ENCODE measurements at regions of chr4 and their contacts with region 1.

Region 1: GRCh38 chr4:173420324-173420752 is 21.4 kb upstream of the SCRG1 start:
- DNase-seq: peak in 5 of 9 donors; percentile 10 to 40 (median 28)
- ATAC-seq: peak; percentile 37
- H3K4me3 ChIP-seq: no peak overlapping the region
- H3K4me3 Mint-ChIP-seq: peak overlapping the region in 1 of 10 donors; percentile 21
- H3K27ac ChIP-seq: no peak overlapping the region
- H3K27ac Mint-ChIP-seq: peak overlapping the region in 4 of 9 donors; percentile 4 to 22 (median 8)
- H3K4me1 ChIP-seq: peaks cover 2 to 5% of the 10 kb centered on the region in 2 donors
- H3K4me1 Mint-ChIP-seq: peaks cover 6 to 25% (median 6%) of the 10 kb centered on the region in 7 donors
- H3K27me3 ChIP-seq: no peaks in the 10 kb centered on the region
- H3K27me3 Mint-ChIP-seq: peaks cover 0 to 6% (median 0%) of the 10 kb centered on the region in 5 donors

Region 2: GRCh38 chr4:172982151-172982590 is 438.2 kb before region 1 on chr4:
- CTCF ChIA-PET with region 1: no interaction called
- POLR2A ChIA-PET with region 1: no interaction called
- intact Hi-C with region 1: no loop called
- DNase-seq: no peak
- ATAC-seq: no peak
- H3K4me3 ChIP-seq: no peak overlapping the region
- H3K4me3 Mint-ChIP-seq: no peak overlapping the region
- H3K27ac ChIP-seq: no peak overlapping the region
- H3K27ac Mint-ChIP-seq: no peak overlapping the region
- H3K4me1 ChIP-seq: no peaks in the 10 kb centered on the region
- H3K4me1 Mint-ChIP-seq: no peaks in the 10 kb centered on the region
- H3K27me3 ChIP-seq: no peaks in the 10 kb centered on the region
- H3K27me3 Mint-ChIP-seq: peaks cover 0 to 24% (median 12%) of the 10 kb centered on the region in 5 donors

Region 3: GRCh38 chr4:173013232-173013930 is 407.0 kb before region 1 on chr4:
- CTCF ChIA-PET with region 1: interaction called, 7 read pairs
- POLR2A ChIA-PET with region 1: no interaction called
- intact Hi-C with region 1: loop called (anchors 1 kb)
- DNase-seq: peak; percentile 12 to 64 (median 50)
- ATAC-seq: peak; percentile 77
- H3K4me3 ChIP-seq: no peak overlapping the region
- H3K4me3 Mint-ChIP-seq: no peak overlapping the region
- H3K27ac ChIP-seq: no peak overlapping the region
- H3K27ac Mint-ChIP-seq: no peak overlapping the region
- H3K4me1 ChIP-seq: no peaks in the 10 kb centered on the region
- H3K4me1 Mint-ChIP-seq: peaks cover 0 to 4% (median 0%) of the 10 kb centered on the region in 7 donors
- H3K27me3 ChIP-seq: no peaks in the 10 kb centered on the region
- H3K27me3 Mint-ChIP-seq: peaks cover 0 to 5% (median 0%) of the 10 kb centered on the region in 5 donors

Region 4: DNA sequence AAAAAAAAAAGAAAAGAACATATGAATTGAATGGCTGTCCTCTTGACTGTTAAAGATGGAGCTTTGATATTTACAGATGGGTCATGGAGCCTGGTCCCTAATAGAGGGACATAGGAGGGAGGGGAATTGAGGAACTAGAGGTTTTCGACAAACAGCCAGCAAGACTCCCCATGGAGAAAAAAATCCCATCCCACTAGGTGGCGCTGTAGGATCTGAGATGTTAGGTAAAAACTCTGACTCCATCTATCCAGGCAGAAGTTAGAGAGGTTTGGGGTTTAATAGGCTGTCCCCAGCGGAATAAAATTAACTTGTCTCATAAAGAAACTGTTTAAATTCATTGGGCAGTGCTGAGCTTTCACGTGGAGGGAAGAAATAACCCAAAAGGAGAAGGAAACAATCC is 132.0 kb before region 1 on chr4:
- CTCF ChIA-PET with region 1: interaction called, 3 read pairs
- POLR2A ChIA-PET with region 1: interaction called, 3 read pairs
- intact Hi-C with region 1: loop called (anchors 1 kb)
- DNase-seq: peak; percentile 22 to 68 (median 44)
- ATAC-seq: peak; percentile 63
- H3K4me3 ChIP-seq: no peak overlapping the region
- H3K4me3 Mint-ChIP-seq: peak overlapping the region in 7 of 10 donors; percentile 15 to 83 (median 55)
- H3K27ac ChIP-seq: no peak overlapping the region
- H3K27ac Mint-ChIP-seq: peak overlapping the region in 5 of 9 donors; percentile 5 to 81 (median 23)
- H3K4me1 ChIP-seq: peaks cover 0 to 6% of the 10 kb centered on the region in 2 donors
- H3K4me1 Mint-ChIP-seq: peaks cover 9 to 22% (median 16%) of the 10 kb centered on the region in 7 donors
- H3K27me3 ChIP-seq: no peaks in the 10 kb centered on the region
- H3K27me3 Mint-ChIP-seq: no peaks in the 10 kb centered on the region

Region 5: GRCh38 chr4:173494013-173494970 is 74.0 kb after region 1 on chr4:
- CTCF ChIA-PET with region 1: interaction called, 14 read pairs
- POLR2A ChIA-PET with region 1: interaction called, 3 read pairs
- intact Hi-C with region 1: loop called (anchors 1 kb)
- DNase-seq: peak in 8 of 9 donors; percentile 43 to 71 (median 56)
- ATAC-seq: peak; percentile 96
- H3K4me3 ChIP-seq: peak overlapping the region; percentile 44
- H3K4me3 Mint-ChIP-seq: peak overlapping the region; percentile 74 to 92 (median 85)
- H3K27ac ChIP-seq: no peak overlapping the region
- H3K27ac Mint-ChIP-seq: peak overlapping the region in 1 of 9 donors; percentile 50
- H3K4me1 ChIP-seq: peaks cover 3 to 9% of the 10 kb centered on the region in 2 donors
- H3K4me1 Mint-ChIP-seq: peaks cover 9 to 35% (median 15%) of the 10 kb centered on the region in 7 donors
- H3K27me3 ChIP-seq: no peaks in the 10 kb centered on the region
- H3K27me3 Mint-ChIP-seq: peaks cover 40 to 71% (median 50%) of the 10 kb centered on the region in 5 donors

Region 6: DNA sequence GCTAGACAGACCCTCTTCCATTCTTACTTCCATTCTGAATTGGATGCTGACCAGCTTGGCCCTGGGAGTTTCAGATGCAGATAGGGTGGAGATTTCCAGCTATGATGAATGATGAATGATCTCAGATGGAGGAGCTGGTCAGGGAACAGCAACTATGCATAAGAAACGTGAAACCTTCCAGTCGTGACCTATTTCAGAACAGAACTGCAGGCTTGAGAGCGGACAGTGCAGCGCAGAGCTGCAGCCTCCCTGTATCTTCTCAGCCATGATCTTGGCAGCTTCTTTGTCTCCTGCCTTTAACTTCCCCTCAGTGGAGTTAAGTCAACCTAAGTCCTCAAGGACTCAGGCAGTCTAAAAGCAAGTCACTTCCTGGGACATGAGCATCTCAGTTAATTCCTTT is 152.9 kb after region 1 on chr4:
- CTCF ChIA-PET with region 1: no interaction called
- POLR2A ChIA-PET with region 1: no interaction called
- intact Hi-C with region 1: no loop called
- DNase-seq: no peak
- ATAC-seq: no peak
- H3K4me3 ChIP-seq: no peak overlapping the region
- H3K4me3 Mint-ChIP-seq: no peak overlapping the region
- H3K27ac ChIP-seq: no peak overlapping the region
- H3K27ac Mint-ChIP-seq: no peak overlapping the region
- H3K4me1 ChIP-seq: no peaks in the 10 kb centered on the region
- H3K4me1 Mint-ChIP-seq: no peaks in the 10 kb centered on the region
- H3K27me3 ChIP-seq: no peaks in the 10 kb centered on the region
- H3K27me3 Mint-ChIP-seq: peaks cover 7 to 55% (median 19%) of the 10 kb centered on the region in 5 donors

Region 7: GRCh38 chr4:174318829-174319764 is 898.8 kb after region 1 on chr4:
- CTCF ChIA-PET with region 1: no interaction called
- POLR2A ChIA-PET with region 1: no interaction called
- intact Hi-C with region 1: loop called (anchors 1 to 2 kb)
- DNase-seq: peak in 5 of 9 donors; percentile 27 to 45 (median 39)
- ATAC-seq: no peak
- H3K4me3 ChIP-seq: no peak overlapping the region
- H3K4me3 Mint-ChIP-seq: no peak overlapping the region
- H3K27ac ChIP-seq: no peak overlapping the region
- H3K27ac Mint-ChIP-seq: no peak overlapping the region
- H3K4me1 ChIP-seq: no peaks in the 10 kb centered on the region
- H3K4me1 Mint-ChIP-seq: no peaks in the 10 kb centered on the region
- H3K27me3 ChIP-seq: no peaks in the 10 kb centered on the region
- H3K27me3 Mint-ChIP-seq: no peaks in the 10 kb centered on the region

Measured in naive thymus-derived CD4-positive, alpha-beta T cell (primary cell).